Psoas muscle (tissue), 8 donors: ENCODE measurements at regions of chr20 and their contacts with region 1.

Region 1: GRCh38 chr20:17542993-17543412 is 11.8 kb upstream of the BFSP1 start:
- DNase-seq: no peak
- ATAC-seq: peak; percentile 24 to 61 (median 43)
- H3K4me3 ChIP-seq: no peak overlapping the region
- H3K27ac ChIP-seq: peak overlapping the region; percentile 47
- H3K4me1 ChIP-seq: no peaks in the 10 kb centered on the region
- H3K27me3 ChIP-seq: peaks cover 0 to 3% (median 0%) of the 10 kb centered on the region in 3 donors
- CTCF ChIP-seq: no peak

Region 2: GRCh38 chr20:17485017-17485416 is 58.0 kb before region 1 on chr20:
- intact Hi-C with region 1: loop called in 1 of 2 experiments (anchors 10 kb)
- DNase-seq: no peak
- ATAC-seq: no peak
- H3K4me3 ChIP-seq: no peak overlapping the region
- H3K27ac ChIP-seq: no peak overlapping the region
- H3K4me1 ChIP-seq: no peaks in the 10 kb centered on the region
- H3K27me3 ChIP-seq: no peaks in the 10 kb centered on the region
- CTCF ChIP-seq: no peak